ENCODE measurements at regions of chr11 and their contacts with region 1.

Region 1: GRCh38 chr11:60265373-60266214 is 14.9 kb upstream of the MS4A4A start:
- DNase-seq: peak; percentile 61
- H3K4me3 ChIP-seq: no peak overlapping the region
- H3K27ac ChIP-seq: no peak overlapping the region
- H3K4me1 ChIP-seq: no peaks in the 10 kb centered on the region
- CTCF ChIP-seq: peak; percentile 92

Region 2: DNA sequence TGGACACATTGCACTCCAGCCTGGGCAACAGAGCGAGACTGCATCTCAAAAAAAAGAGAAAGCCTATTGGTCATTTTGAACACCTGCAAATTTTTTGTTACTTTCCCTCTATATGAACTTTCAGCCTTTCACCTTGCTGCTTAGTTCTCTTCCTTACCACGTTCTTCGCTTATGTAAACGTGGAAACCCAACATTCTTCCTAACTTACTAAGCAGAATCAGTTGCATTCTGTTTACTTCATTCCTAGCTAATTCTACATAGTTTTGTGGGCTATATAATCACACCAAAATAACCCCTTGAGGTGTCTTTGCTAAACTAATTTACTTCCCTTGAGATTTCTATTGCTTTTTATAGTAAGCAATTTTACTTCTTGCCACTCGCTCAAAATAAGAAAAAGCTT is 38.1 kb after region 1 on chr11:
- CTCF ChIA-PET with region 1: no interaction called
- POLR2A ChIA-PET with region 1: no interaction called
- intact Hi-C with region 1: no loop called
- DNase-seq: no peak
- H3K4me3 ChIP-seq: no peak overlapping the region
- H3K27ac ChIP-seq: no peak overlapping the region
- H3K4me1 ChIP-seq: no peaks in the 10 kb centered on the region
- CTCF ChIP-seq: no peak

Region 3: DNA sequence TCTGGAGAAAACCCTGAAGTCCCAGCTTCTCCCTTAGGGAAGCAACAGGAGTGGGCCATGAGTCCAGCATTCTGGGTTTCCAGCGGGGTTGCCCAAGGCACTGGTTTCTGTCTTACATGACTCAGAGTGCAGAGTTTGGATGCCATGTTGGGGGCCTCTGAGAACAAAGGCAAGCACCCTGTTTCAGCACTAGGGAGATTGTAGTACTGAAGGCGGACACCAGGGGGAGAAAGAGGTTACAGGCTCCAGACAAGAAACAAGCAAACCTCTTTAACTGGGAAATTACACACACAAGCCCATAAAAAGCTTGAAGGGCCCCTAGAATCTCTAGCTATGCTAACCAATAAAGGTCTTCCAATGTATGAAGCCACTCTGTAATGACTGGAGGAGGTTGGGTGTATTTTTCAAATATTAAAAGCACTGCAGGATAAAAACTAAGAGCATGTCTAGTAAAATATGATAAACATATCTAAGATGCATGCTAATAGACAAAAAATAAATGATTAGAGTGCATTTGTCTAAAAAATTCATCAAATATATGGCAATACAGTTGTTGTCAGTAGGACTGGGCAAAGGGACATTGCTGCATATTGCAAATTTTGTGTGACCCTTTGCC is 68.5 kb after region 1 on chr11:
- CTCF ChIA-PET with region 1: no interaction called
- POLR2A ChIA-PET with region 1: no interaction called
- intact Hi-C with region 1: loop called (anchors 5 kb)
- DNase-seq: peak; percentile 73
- H3K4me3 ChIP-seq: no peak overlapping the region
- H3K27ac ChIP-seq: no peak overlapping the region
- H3K4me1 ChIP-seq: no peaks in the 10 kb centered on the region
- CTCF ChIP-seq: peak; percentile 88

Region 4: GRCh38 chr11:60615497-60615896 is 349.9 kb after region 1 on chr11:
- CTCF ChIA-PET with region 1: no interaction called
- POLR2A ChIA-PET with region 1: no interaction called
- intact Hi-C with region 1: loop called (anchors 5 kb)
- DNase-seq: no peak
- H3K4me3 ChIP-seq: no peak overlapping the region
- H3K27ac ChIP-seq: no peak overlapping the region
- H3K4me1 ChIP-seq: peaks cover 4% of the 10 kb centered on the region
- CTCF ChIP-seq: no peak

Region 5: GRCh38 chr11:60634126-60634525 is 368.5 kb after region 1 on chr11:
- CTCF ChIA-PET with region 1: no interaction called
- POLR2A ChIA-PET with region 1: no interaction called
- intact Hi-C with region 1: loop called (anchors 5 kb)
- DNase-seq: peak; percentile 58
- H3K4me3 ChIP-seq: no peak overlapping the region
- H3K27ac ChIP-seq: no peak overlapping the region
- H3K4me1 ChIP-seq: peaks cover 10% of the 10 kb centered on the region
- CTCF ChIP-seq: peak; percentile 85

Region 6: GRCh38 chr11:60756307-60757032 is 490.9 kb after region 1 on chr11 and contains the start of gene MS4A15:
- CTCF ChIA-PET with region 1: no interaction called
- POLR2A ChIA-PET with region 1: no interaction called
- intact Hi-C with region 1: loop called (anchors 1 kb)
- DNase-seq: peak; percentile 50
- H3K4me3 ChIP-seq: no peak within 1 kb of the TSS
- H3K27ac ChIP-seq: no peak within 1 kb of the TSS
- H3K4me1 ChIP-seq: no peaks in the 10 kb centered on the region
- CTCF ChIP-seq: peak; percentile 75
- total RNA-seq, gene MS4A15: not detected in 2 replicates

Measured in OCI-LY7 (cell line).